ENCODE measurements at regions of chr22 and their contacts with region 1.

Region 1: DNA sequence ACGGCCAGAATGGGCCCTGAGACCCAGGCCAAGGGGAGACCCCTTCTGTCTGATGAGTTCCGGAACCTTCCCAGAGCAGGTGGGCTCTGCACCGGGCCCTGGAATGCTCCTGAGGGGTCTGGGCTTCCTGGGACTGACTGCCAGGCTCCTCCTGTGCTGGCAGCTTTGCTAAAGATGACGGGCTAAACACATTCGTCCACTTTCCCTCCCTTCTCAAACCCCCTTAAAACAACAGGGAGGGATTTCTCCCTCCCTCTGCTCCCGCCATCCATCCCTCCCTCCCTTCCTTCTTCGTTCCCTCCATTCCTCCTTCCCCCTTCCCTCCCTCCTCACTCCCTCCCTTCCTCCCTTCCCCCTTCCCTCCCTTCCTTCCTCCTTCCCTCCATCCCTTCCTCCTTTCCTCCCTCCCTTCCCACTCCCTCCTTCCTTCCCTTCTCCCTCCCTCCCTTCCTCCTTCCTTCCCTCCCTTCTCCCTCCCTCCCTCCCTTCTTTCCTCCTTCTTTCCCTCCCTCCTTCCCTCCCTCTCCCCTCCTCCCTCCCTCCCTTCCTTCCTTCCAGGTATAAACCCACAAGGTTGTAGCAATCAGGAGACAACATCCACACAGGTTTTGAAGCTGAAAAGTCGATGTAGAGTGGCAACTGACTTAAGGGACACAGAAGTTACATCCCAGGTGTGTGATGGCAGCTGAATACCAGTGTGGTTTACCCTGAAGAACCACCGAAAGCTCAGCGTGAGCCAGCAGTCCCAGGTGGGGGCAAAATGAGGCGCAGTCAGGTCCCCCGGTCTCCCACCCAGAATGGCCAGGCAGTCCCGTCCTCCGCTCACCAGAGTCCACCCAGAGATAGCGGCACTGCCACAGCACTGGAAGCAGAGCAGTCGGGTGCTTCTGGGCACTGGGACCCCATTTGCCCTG is 18.8 kb upstream of the MGAT3 start:
- H3K4me3 ChIP-seq: no peak overlapping the region
- H3K27ac ChIP-seq: no peak overlapping the region
- H3K4me1 ChIP-seq: peaks cover 5% of the 10 kb centered on the region
- CTCF ChIP-seq: no peak

Region 2: DNA sequence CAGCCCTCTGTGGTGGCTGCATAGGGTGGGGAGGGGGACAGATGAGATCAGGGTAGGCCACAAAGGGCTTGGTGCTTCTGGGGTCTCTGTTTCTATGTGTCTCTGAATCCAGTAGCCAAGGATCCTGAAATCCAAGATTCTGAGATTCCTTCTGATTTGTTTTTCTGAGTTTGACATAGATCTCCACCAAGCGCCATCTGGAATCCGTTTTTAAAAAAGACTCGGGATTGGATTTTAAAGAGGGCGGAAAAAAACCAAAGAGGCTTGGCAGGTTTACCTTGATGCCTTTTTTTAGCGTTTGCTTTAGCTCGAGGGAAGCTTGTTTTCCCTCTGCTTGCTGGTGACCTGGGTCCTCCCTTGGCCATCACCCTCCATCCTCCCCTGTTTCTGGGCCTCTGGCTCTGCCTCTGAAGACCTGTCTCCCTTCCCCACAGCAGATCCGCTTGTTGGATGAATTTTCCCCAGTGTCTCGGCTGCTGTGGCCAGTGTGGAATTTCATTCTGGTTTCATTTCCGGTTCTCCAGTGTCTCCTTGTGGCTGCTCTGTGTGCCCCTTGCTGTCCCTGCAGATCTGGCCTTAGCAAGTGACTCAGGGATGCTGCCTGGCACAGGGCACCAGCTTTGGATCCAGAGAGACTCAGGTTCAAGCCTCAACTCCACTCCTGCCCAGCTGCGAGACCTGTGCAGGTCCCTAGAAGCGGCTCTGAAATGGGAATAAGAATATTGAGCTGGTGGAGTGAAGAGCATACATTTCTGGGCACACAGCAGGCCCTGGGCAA is 73.1 kb before region 1 on chr22:
- CTCF ChIA-PET with region 1: no interaction called
- POLR2A ChIA-PET with region 1: no interaction called
- H3K4me3 ChIP-seq: no peak overlapping the region
- H3K27ac ChIP-seq: no peak overlapping the region
- H3K4me1 ChIP-seq: no peaks in the 10 kb centered on the region; the same call in 1 of the 2 replicates
- CTCF ChIP-seq: no peak

Region 3: GRCh38 chr22:39405346-39406085 is 32.5 kb before region 1 on chr22:
- CTCF ChIA-PET with region 1: interaction called, 3 read pairs
- POLR2A ChIA-PET with region 1: interaction called, 12 read pairs
- H3K4me3 ChIP-seq: no peak overlapping the region
- H3K27ac ChIP-seq: no peak overlapping the region
- H3K4me1 ChIP-seq: no peaks in the 10 kb centered on the region
- CTCF ChIP-seq: no peak

Region 4: DNA sequence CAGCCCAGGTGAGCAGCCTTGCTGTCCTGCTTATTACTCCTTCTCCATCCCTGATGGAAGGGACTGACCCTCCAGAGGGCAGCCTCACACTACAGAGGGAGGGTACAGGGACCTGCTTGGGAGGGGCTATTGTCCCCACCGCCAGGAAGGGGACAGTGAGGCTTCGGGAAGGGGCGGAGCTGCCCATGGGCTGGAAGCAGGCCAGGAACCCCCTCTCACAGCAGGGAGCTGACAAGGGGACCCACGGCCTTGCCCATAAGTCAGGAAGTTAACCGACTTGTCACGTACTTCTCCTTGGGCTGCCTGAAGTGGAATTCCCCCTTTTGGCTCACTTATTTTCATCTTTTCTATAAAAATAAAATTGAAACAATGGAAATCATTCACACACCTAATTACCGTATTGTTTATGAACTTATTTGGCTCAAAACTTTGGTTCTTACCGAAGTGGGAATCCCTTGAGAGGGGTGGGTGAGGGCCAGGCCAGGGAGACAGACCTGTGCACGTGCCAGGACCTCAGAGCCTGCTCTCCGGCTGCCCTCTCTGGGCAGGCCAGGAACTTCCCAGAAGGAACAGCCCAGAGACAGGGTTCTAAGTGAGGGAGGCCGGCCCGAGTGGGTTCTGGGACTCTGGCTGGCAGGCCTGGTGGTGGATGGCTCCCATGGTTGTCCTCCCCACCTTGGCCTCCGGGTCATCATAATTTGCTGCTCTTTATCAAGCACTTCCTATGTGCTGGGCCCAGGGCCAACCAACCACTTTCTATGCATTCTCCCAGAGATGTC is 24.6 kb after region 1 on chr22:
- CTCF ChIA-PET with region 1: no interaction called
- POLR2A ChIA-PET with region 1: no interaction called
- H3K4me3 ChIP-seq: no peak overlapping the region
- H3K27ac ChIP-seq: no peak overlapping the region
- H3K4me1 ChIP-seq: peaks cover 5% of the 10 kb centered on the region; the same call in 1 of the 2 replicates
- CTCF ChIP-seq: no peak

Region 5: DNA sequence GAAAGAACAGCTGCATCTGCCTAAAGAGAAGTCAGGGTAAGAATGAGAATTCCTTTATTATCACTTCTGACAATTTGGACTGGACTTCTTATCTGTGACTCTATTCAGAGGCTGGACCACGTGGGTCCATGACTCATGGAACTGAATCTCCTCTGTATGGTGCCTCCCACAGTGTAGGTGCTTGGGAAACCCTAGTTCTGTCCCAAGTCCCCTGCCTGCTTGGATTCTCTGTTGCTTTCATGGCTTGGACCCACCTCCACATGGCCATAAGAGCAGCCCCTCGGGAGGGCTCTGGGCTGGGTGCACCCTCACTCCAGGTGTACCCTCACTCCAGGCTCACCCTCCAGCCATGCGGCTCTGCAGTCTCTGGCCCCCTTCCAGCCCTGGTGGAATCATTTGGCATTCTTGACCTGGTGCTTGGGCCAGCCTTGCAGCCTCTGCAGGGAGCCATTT is 285.9 kb after region 1 on chr22:
- CTCF ChIA-PET with region 1: no interaction called
- POLR2A ChIA-PET with region 1: no interaction called
- H3K4me3 ChIP-seq: no peak overlapping the region
- H3K27ac ChIP-seq: no peak overlapping the region
- H3K4me1 ChIP-seq: peaks cover 2% of the 10 kb centered on the region; the same call in 1 of the 2 replicates
- CTCF ChIP-seq: no peak